Mammary epithelial cell (primary cell): ENCODE measurements at regions of chr6 and their contacts with region 1.

Region 1: DNA sequence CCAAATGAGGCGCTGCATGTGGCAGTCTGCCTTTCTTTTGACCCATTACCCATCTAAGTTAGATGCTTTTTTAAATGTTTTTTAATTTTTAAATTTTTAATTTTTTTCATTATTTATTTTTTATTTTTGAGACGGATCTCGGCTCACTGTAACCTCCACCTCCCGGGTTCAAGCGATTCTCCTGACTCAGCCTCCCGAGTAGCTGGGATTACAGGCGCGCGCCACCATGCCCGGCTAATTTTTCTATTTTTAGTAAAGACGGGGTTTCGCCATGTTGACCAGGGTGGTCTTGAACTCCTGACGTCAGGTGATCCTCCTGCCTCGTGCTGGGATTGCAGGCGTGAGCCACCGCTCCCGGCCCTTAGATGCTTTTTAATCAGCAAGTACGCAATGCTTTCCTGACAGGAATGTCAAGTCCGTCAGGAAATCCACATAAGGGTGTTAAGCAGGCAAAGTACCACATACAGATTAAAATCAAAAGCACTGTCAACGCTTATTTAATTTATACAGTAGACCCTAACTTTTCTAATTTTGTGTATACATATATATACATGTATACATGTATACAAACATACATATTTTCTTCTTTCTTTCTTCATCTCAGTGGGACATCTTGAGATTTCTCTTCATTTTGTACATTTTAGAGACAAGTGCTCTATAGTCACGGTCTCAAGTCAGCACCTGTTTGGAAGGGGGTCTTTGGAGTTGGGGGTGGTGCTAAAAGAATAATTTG is 995 bp upstream of the GSTA4 start:
- DNase-seq: peak; percentile 81
- H3K4me3 ChIP-seq: peak overlapping the region in 1 of 3 experiments; percentile 14
- H3K27ac ChIP-seq: no peak overlapping the region
- H3K4me1 ChIP-seq: peaks cover 17% of the 10 kb centered on the region
- H3K27me3 ChIP-seq: no peaks in the 10 kb centered on the region
- CTCF ChIP-seq: no peak

Region 2: DNA sequence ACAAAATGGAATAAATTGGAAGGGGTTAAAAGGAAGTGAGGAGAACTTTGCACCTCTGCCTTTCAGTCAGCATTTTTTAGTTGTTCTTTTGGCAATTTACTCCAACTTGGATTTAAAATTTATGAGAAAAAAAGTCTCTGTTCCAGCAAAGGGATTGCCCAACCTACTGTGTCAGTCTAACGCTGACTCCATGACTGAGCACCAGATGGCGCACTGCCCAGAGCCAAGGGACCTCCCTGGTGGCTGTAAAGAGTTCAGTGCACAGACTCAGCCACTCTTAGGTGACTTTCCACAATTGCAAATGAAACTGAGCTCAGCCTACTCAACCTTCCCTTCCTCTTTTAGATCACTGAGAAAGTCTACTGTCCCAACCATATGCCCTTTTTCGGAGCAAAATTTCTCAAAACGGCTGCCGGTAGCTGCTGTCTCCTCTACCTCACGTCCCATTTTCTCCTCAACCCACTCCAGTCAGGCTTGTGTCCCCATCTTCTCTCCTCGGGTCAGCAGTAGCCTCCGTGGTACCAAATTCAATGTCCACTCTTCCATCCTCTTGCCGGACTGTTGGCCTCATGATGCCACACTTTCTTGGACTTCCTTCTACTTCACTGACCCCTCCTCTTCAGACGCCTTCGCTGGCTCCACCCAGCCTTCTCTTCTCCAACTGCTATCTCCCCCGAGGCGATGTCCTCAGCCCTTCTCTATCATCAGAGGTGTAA is 271.5 kb before region 1 on chr6:
- CTCF ChIA-PET with region 1: no interaction called
- dilution Hi-C with region 1: no loop called
- in situ Hi-C with region 1: no loop called
- intact Hi-C with region 1: loop called (anchors 10 kb)
- DNase-seq: peak; percentile 63
- H3K4me3 ChIP-seq: no peak overlapping the region
- H3K27ac ChIP-seq: no peak overlapping the region
- H3K4me1 ChIP-seq: peaks cover 28% of the 10 kb centered on the region
- H3K27me3 ChIP-seq: no peaks in the 10 kb centered on the region
- CTCF ChIP-seq: peak; percentile 83 to 84

Region 3: GRCh38 chr6:52839119-52840055 is 156.7 kb before region 1 on chr6:
- CTCF ChIA-PET with region 1: no interaction called
- dilution Hi-C with region 1: no loop called
- in situ Hi-C with region 1: no loop called
- intact Hi-C with region 1: loop called (anchors 5 kb)
- DNase-seq: peak; percentile 58
- H3K4me3 ChIP-seq: no peak overlapping the region
- H3K27ac ChIP-seq: no peak overlapping the region
- H3K4me1 ChIP-seq: no peaks in the 10 kb centered on the region
- H3K27me3 ChIP-seq: no peaks in the 10 kb centered on the region
- CTCF ChIP-seq: peak; percentile 57 to 64

Region 4: DNA sequence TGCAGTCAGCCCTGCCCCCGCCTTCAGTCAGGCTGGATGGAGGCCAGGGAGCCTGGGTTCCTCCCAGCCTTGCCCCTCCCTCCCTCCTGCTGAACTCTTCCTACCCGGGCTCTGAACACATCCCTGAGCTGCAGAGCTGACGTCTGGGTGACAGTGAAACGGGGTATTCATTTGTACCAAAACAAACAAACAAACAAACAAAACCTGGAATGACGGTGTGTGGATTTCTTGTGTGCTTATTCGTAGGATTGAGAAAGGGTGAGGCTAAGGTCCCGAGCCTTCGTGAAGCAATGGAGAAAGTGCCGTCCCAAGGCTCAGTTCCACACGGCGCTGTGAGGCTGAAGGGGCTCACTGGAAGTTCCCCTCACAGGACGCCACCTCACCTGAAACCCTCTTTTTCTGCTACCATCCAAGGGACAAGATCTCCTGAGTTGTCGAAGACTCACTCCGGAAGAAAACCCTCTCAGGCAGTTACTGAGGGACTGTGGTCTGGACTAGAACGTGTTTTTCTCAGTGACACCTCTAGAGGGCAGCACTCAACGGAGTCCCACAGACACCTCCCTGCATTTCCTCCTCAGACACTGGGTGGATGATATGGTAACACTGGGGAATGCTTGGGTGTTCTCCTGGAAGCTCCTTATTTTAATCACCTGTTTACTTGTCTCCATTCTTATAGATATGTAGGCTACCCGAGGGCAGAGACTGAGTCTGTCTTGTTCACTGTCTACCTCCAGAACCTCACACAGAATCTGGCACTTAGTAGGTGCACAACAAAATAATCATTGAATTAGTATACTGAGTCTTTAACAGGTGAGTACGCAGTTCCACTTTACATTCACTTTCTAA is 113.9 kb before region 1 on chr6:
- CTCF ChIA-PET with region 1: interaction called, 3 read pairs
- dilution Hi-C with region 1: no loop called
- in situ Hi-C with region 1: loop called in 1 of 2 experiments (anchors 5 kb)
- intact Hi-C with region 1: loop called (anchors 1 kb)
- DNase-seq: peak; percentile 70
- H3K4me3 ChIP-seq: peak overlapping the region; percentile 39 to 57 (median 49)
- H3K27ac ChIP-seq: no peak overlapping the region
- H3K4me1 ChIP-seq: peaks cover 5% of the 10 kb centered on the region
- H3K27me3 ChIP-seq: peaks cover 13% of the 10 kb centered on the region
- CTCF ChIP-seq: peak; percentile 71 to 86

Region 5: DNA sequence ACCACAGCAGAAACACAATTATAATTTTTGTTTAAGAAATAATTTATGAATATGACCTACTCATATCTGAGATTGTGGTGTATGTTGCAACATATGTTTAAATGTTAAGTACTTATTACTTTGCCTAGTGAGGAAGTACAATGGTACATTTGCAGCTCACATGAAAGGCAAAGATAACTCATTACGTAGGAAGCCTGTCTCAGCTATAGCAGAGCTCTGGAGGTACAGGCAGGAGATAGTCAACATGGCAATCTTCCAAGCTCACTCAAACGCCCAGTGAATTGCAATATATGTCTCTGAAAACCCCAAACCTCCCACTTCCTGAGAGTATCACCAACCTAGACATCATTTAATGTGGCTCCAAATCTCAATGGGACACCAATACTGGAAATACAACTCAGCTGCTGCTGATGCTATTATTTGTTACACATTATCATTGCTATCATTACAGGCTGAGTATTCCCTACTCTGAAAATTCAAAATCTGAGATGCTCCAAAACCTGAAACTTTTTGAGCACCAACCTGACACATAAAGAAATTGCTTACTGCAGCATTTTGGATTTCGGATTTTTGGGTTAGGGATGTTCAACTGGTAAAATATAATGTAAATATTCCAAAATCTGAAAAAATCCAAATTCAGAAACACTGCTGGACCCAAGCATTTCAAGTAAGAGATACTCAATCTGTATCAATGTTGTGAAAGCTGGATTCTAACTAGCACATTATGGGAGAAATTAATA is 24.1 kb after region 1 on chr6:
- CTCF ChIA-PET with region 1: no interaction called
- dilution Hi-C with region 1: no loop called
- in situ Hi-C with region 1: no loop called
- intact Hi-C with region 1: no loop called
- DNase-seq: no peak
- H3K4me3 ChIP-seq: no peak overlapping the region
- H3K27ac ChIP-seq: no peak overlapping the region
- H3K4me1 ChIP-seq: no peaks in the 10 kb centered on the region
- H3K27me3 ChIP-seq: no peaks in the 10 kb centered on the region
- CTCF ChIP-seq: no peak

Region 6: DNA sequence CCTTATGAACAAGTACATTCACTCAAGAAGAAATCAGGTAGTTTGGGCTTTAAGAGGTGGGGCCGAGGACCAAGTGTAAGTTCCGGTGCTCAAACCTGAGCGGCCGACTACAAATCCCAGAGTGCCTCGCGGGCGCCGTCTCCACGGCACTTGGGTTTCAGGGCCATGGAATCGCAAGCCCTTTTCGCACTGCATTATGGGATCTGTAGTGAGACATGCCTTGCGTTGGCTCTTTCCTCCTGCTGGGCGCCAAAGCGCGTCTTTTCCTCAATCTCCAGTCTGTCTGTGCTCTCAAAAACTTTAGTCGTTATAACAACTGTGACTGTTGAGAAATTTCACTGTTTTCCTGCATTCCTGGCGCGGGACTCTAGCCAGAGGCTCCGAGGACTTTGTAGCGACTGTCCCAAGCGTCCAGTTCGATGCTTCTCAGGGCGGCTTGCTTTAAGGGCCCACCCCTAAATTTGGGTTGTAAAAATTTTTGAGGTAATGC is 68.7 kb after region 1 on chr6:
- CTCF ChIA-PET with region 1: no interaction called
- dilution Hi-C with region 1: no loop called
- in situ Hi-C with region 1: loop called in 1 of 2 experiments (anchors 5 kb)
- intact Hi-C with region 1: no loop called
- DNase-seq: peak; percentile 97
- H3K4me3 ChIP-seq: peak overlapping the region; percentile 85 to 95 (median 88)
- H3K27ac ChIP-seq: peak overlapping the region; percentile 45
- H3K4me1 ChIP-seq: peaks cover 11% of the 10 kb centered on the region
- H3K27me3 ChIP-seq: no peaks in the 10 kb centered on the region
- CTCF ChIP-seq: no peak